ENCODE measurements at regions of chr4 and their contacts with region 1.

Region 1: GRCh38 chr4:47002593-47002992 is 9.2 kb upstream of the GABRA4 start:
- DNase-seq: no peak
- ATAC-seq: peak in 3 of 8 donors; percentile 55 to 65 (median 58)
- H3K4me3 ChIP-seq: no peak overlapping the region
- H3K27ac ChIP-seq: no peak overlapping the region
- H3K4me1 ChIP-seq: peaks cover 0 to 9% (median 0%) of the 10 kb centered on the region in 9 donors
- H3K27me3 ChIP-seq: no peaks in the 10 kb centered on the region
- CTCF ChIP-seq: peak in 8 of 9 donors; percentile 5 to 59 (median 44)

Region 2: GRCh38 chr4:46937493-46937892 is 65.1 kb before region 1 on chr4:
- intact Hi-C with region 1: loop called in 5 of 10 experiments (anchors 2 to 10 kb)
- DNase-seq: no peak
- ATAC-seq: no peak
- H3K4me3 ChIP-seq: no peak overlapping the region
- H3K27ac ChIP-seq: no peak overlapping the region
- H3K4me1 ChIP-seq: peaks cover 0 to 7% (median 0%) of the 10 kb centered on the region in 9 donors
- H3K27me3 ChIP-seq: no peaks in the 10 kb centered on the region
- CTCF ChIP-seq: peak in 1 of 9 donors; percentile 24